ENCODE measurements at regions of chr7 and their contacts with region 1.

Region 1: DNA sequence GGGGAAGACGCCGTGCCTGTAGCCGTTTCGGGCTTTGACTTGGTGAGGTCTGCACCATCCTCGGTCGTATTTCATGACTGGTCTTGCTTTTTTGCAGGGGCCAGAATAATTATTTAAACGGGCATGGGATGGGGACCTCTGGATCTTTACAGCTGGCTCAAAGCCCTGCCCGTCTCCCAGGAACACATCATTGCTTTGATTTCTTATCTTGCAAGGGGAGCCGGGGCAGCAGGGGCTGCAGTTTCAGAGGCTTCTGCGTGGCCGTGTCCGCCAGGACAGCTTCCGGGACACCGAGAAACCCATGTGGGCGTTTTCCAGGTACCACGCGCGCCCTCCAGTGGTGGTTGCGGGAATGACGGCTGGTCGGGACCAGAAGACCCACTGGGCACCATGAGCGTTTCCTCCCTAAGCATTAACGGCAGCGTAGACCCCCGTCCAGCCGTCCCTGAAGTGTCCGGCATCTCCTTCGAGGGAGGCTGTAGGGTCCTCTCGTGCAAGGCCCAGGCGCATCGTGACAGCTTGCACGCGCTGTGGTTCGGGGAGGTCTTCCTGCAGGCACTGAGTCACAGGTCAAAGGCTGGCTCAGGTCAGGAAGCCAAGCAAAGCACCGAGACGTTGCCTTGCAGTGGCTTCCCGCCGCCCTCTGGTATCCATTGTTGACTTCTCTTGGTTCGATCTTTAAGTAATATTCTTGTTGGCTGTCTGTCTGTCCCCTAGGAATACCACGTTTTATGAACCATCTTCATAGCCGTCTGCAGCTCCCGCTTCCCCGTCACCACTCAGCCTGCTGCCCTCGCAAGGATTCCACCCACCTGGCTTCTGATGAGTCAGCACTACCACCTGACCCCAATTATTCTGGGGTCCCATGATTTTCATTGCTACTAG is 16.2 kb upstream of the ZFAND2A start:
- DNase-seq: peak; percentile 86
- CTCF ChIP-seq: peak; percentile 92

Region 2: GRCh38 chr7:985915-986741 is 190.1 kb before region 1 on chr7:
- CTCF ChIA-PET with region 1: interaction called, 170 read pairs
- POLR2A ChIA-PET with region 1: no interaction called
- DNase-seq: no peak
- CTCF ChIP-seq: no peak

Region 3: GRCh38 chr7:1076181-1077072 is 99.8 kb before region 1 on chr7:
- CTCF ChIA-PET with region 1: interaction called, 11 read pairs
- POLR2A ChIA-PET with region 1: no interaction called
- DNase-seq: no peak
- CTCF ChIP-seq: no peak

Region 4: DNA sequence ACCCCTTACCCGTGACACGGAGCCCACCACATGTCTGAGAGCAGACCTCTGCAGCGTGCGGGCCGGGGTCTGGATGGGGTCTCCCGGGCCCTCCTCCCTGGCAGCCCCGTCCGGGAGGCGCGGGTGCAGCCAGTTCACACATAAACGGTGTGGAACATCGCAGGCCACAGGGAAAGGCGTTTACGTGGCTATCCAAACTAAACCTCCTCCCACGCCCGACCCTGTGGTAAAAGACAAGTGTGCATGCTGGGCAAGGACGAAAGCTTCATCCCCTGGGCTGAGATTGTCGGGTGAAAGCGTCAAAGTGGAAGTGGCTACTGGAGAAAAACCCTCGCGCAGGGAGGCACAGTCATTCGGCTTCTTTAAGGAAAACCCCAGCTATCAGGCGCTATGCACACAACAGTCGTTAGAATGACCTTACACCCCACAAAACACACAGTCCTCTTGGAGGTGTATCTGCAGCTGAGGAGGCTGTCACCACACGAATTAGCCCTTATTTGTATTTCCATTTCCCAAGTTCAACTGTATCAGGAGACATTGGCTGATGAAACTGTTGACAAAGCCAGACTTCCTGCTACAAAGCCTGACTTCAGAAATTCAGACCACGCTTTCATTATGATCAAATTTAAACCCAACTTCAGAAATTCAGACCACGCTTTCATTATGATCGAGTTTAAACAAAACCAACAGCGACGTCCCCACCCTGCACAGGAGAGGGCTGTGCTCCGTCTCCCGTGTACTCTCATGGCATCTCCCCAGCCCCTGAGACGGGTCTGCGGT is 73.0 kb before region 1 on chr7:
- CTCF ChIA-PET with region 1: interaction called, 14 read pairs
- POLR2A ChIA-PET with region 1: no interaction called
- DNase-seq: peak; percentile 74
- CTCF ChIP-seq: no peak

Region 5: DNA sequence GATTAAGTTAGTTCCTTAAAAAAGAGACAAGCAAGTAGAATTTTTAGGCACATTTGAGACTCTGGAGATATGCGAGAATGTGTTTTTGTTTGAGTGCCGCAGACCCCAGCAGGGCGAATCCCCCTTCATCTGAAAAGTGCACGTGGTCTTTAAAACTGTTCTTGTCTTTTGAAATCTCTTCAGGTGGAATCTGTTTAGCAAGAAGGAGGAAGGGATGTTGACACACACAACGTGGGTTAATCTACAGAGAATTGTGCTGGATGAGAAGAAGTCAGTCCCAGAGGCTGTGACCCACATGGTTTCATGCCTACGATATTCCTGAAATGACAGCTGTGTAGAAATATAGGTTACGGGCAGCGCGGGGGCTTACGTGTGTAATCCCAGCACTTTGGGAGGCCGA is 10.9 kb after region 1 on chr7:
- CTCF ChIA-PET with region 1: interaction called, 13 read pairs
- POLR2A ChIA-PET with region 1: no interaction called
- DNase-seq: no peak
- CTCF ChIP-seq: no peak

Measured in GM10248 (cell line).